AG04449 (cell line): ENCODE measurements at regions of chr21 and their contacts with region 1.

Region 1: GRCh38 chr21:31098576-31099005 is 60.3 kb upstream of the KRTAP19-8 start:
- DNase-seq: no peak
- H3K4me3 ChIP-seq: no peak overlapping the region
- CTCF ChIP-seq: peak; percentile 90

Region 2: GRCh38 chr21:31022306-31022705 is 76.3 kb before region 1 on chr21:
- CTCF ChIA-PET with region 1: no interaction called
- POLR2A ChIA-PET with region 1: no interaction called
- DNase-seq: no peak
- H3K4me3 ChIP-seq: no peak overlapping the region
- CTCF ChIP-seq: no peak

Region 3: DNA sequence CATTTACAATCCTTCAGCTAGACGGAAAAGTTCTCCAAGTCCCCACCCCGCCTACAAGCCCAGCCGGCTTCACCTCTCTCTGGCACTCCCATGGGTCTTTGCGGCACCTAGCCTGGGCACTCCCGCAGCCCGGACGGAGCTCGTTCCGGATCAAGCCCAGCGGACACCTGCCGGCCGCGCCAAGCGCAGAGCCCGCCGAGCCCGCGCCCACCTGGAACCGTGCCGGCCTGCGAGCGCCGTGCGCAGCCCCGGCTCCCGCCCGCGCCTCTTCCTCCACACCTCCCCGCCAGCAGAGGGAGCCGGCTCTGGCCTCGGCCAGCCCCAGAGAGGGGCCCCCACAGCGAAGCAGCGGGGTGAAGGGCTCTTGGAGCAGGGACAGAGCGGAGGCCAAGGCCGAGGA is 10.3 kb before region 1 on chr21:
- CTCF ChIA-PET with region 1: interaction called, 12 read pairs
- POLR2A ChIA-PET with region 1: no interaction called
- DNase-seq: no peak
- H3K4me3 ChIP-seq: no peak overlapping the region
- CTCF ChIP-seq: no peak

Region 4: GRCh38 chr21:31117128-31117916 is 18.7 kb after region 1 on chr21:
- CTCF ChIA-PET with region 1: interaction called, 68 read pairs
- POLR2A ChIA-PET with region 1: no interaction called
- DNase-seq: peak; percentile 61
- H3K4me3 ChIP-seq: no peak overlapping the region
- CTCF ChIP-seq: no peak